ENCODE measurements at regions of chr3 and their contacts with region 1.

Region 1: GRCh38 chr3:141342386-141342785 is 25.9 kb upstream of the ZBTB38 start:
- DNase-seq: no peak
- H3K4me3 ChIP-seq: no peak overlapping the region
- H3K27ac ChIP-seq: no peak overlapping the region
- H3K4me1 ChIP-seq: peaks cover 3% of the 10 kb centered on the region
- CTCF ChIP-seq: no peak

Region 2: DNA sequence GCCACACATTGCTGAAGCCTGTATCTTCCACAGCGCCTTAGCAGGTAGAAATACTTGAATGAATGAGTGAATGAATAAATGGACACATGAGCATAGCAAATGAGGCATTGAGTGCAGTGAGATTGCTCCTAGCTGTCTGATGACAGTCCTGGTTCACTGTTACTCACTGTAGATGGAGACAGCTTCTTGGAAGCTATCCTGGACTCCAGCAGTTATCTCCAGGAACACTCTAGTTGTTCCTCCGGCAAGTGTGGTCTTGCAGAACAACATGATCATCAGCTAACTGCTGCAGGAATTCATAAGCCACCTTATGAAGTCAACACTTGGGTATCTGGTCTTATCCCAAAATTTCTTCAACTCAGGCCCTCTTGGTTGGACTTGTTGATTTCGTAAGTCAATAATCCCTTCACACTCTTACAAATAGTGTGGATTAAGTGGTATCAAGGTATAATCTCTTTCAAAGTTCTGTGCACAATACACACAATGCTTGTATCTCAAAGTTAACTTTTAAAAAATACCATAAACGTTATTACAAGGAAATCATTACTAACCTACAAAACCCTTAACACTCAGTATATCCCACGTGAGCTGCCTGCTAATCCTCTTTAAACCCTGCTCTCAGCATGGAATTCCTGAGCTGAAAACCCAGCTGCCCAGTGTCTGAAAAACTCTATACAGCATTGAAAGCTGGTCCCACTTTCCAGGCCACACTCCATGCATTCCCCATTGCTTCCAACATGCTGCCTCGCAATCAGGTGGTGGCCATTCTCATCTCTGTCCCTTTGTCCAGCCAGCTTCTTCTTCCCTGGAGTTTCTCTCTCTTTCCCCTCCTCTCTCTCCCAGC is 11.5 kb after region 1 on chr3:
- CTCF ChIA-PET with region 1: no interaction called
- POLR2A ChIA-PET with region 1: interaction called, 10 read pairs
- intact Hi-C with region 1: no loop called
- DNase-seq: no peak
- H3K4me3 ChIP-seq: no peak overlapping the region
- H3K27ac ChIP-seq: no peak overlapping the region
- H3K4me1 ChIP-seq: no peaks in the 10 kb centered on the region
- CTCF ChIP-seq: no peak

Measured in OCI-LY7 (cell line).